ENCODE measurements at regions of chr11 and their contacts with region 1.

Region 1: GRCh38 chr11:72642884-72643511 is 31.2 kb downstream of the PDE2A start:
- DNase-seq: peak; percentile 60 to 85
- H3K4me3 ChIP-seq: peak overlapping the region; percentile 52
- H3K4me3 Mint-ChIP-seq: peak overlapping the region; percentile 61
- H3K27ac Mint-ChIP-seq: no peak overlapping the region
- H3K4me1 ChIP-seq: peaks cover 5% of the 10 kb centered on the region; the same call in 1 of the 2 replicates
- H3K4me1 Mint-ChIP-seq: no peaks in the 10 kb centered on the region
- H3K27me3 ChIP-seq: peaks cover 12% of the 10 kb centered on the region
- H3K27me3 Mint-ChIP-seq: peaks cover 3% of the 10 kb centered on the region
- CTCF ChIP-seq: peak; percentile 97 to 100

Region 2: GRCh38 chr11:72585762-72586311 is 57.2 kb before region 1 on chr11:
- CTCF ChIA-PET with region 1: interaction called, 22 read pairs
- POLR2A ChIA-PET with region 1: no interaction called
- intact Hi-C with region 1: loop called (anchors 1 kb)
- DNase-seq: peak; percentile 75 to 86
- H3K4me3 ChIP-seq: no peak overlapping the region
- H3K4me3 Mint-ChIP-seq: no peak overlapping the region
- H3K27ac Mint-ChIP-seq: no peak overlapping the region
- H3K4me1 ChIP-seq: no peaks in the 10 kb centered on the region
- H3K4me1 Mint-ChIP-seq: no peaks in the 10 kb centered on the region
- H3K27me3 ChIP-seq: peaks cover under 1% of the 10 kb centered on the region; the same call in 1 of the 2 replicates
- H3K27me3 Mint-ChIP-seq: peaks cover 7% of the 10 kb centered on the region
- CTCF ChIP-seq: peak; percentile 97 to 98

Region 3: GRCh38 chr11:72598906-72599305 is 44.1 kb before region 1 on chr11:
- CTCF ChIA-PET with region 1: interaction called, 56 read pairs
- POLR2A ChIA-PET with region 1: no interaction called
- intact Hi-C with region 1: loop called (anchors 1 kb)
- DNase-seq: peak; percentile 72 to 76
- H3K4me3 ChIP-seq: no peak overlapping the region
- H3K4me3 Mint-ChIP-seq: no peak overlapping the region
- H3K27ac Mint-ChIP-seq: no peak overlapping the region
- H3K4me1 ChIP-seq: no peaks in the 10 kb centered on the region
- H3K4me1 Mint-ChIP-seq: no peaks in the 10 kb centered on the region
- H3K27me3 ChIP-seq: peaks cover 4% of the 10 kb centered on the region
- H3K27me3 Mint-ChIP-seq: peaks cover 25% of the 10 kb centered on the region
- CTCF ChIP-seq: peak; percentile 71 to 82

Region 4: GRCh38 chr11:72624623-72625201 is 18.3 kb before region 1 on chr11:
- CTCF ChIA-PET with region 1: no interaction called
- POLR2A ChIA-PET with region 1: no interaction called
- intact Hi-C with region 1: loop called (anchors 1 kb)
- DNase-seq: no peak
- H3K4me3 ChIP-seq: no peak overlapping the region
- H3K4me3 Mint-ChIP-seq: no peak overlapping the region
- H3K27ac Mint-ChIP-seq: no peak overlapping the region
- H3K4me1 ChIP-seq: peaks cover 6% of the 10 kb centered on the region
- H3K4me1 Mint-ChIP-seq: peaks cover 9% of the 10 kb centered on the region
- H3K27me3 ChIP-seq: peaks cover 5% of the 10 kb centered on the region
- H3K27me3 Mint-ChIP-seq: peaks cover 20% of the 10 kb centered on the region
- CTCF ChIP-seq: no peak